Right ventricle myocardium inferior (tissue), 1 donor: ENCODE measurements at regions of chr7 and their contacts with region 1.

Region 1: DNA sequence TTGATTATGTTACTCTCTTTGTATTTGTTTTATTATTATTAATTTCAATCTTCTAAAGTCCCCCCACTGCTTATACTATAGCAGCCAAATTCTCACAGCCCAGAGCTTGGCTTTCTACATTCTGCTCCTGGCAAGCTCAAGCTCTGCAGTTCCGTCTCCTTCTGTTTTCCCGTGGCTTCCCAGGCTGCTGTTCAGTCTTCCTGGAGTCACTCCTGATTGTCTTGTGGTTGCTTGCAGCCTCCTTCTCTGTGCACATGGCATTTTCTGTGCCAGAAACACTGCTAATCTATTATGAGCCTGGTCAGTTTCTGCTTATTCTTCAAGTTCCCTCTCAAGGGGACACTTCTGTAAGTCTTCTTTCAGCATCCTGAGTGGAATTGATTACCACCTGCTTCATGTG is 533.7 kb upstream of the IGFBP3 start:
- DNase-seq: no peak
- ATAC-seq: peak; percentile 72

Region 2: DNA sequence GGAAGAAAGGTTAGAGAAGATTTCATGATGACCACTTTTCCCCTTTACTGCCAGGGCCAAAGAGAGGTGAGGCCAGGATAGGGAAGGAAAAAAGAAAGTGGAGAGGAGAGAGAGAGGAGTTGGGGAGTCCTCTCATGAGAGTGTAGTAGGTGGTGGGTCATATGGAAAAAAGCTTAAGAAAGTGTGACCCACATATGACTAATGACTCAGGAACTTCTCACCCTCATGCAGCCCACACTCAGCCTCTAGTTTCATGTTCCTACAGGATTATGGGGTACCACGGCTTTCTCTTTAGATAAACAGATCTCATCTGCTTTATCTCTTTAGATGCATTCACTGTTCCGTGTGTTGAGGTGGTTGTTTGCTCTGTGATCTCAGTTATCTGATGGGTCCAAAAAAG is 71.2 kb before region 1 on chr7:
- intact Hi-C with region 1: loop called (anchors 2 kb)
- DNase-seq: no peak
- ATAC-seq: no peak

Region 3: GRCh38 chr7:46610746-46611145 is 155.9 kb after region 1 on chr7:
- intact Hi-C with region 1: no loop called
- DNase-seq: no peak
- ATAC-seq: peak; percentile 80

Region 4: DNA sequence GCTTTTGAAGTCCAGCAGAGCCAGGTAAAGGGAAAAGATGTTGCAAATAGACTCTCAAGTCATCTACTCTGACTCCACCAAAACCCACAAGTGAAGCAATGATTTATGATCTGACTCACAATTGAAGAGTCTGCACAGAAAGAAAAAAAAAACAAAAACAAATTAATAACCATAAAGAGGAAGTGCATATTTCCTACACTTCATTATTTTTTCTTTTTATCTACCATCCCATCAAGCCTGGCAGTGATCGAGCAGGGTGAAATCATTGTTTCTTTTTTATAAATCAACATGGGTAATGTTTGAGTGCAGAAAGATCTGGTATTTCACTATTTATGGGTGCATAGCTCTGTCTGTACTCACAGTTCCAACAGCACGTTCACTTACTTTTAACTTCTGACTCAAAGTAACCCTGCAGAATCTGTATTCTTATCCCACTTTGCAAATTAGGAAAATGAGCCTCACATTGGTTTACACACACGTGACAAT is 298.1 kb after region 1 on chr7:
- intact Hi-C with region 1: no loop called
- DNase-seq: no peak
- ATAC-seq: no peak